Activated CD4-positive, alpha-beta T cell treated with anti-CD3 and anti-CD28 coated beads for 36 hours (primary cell): ENCODE measurements at regions of chr3 and their contacts with region 1.

Region 1: GRCh38 chr3:110314512-110315114 is 757.0 kb upstream of the NECTIN3 start:
- DNase-seq: peak; percentile 67
- ATAC-seq: peak; percentile 63
- H3K4me3 Mint-ChIP-seq: no peak overlapping the region
- H3K27ac Mint-ChIP-seq: no peak overlapping the region
- H3K4me1 Mint-ChIP-seq: peaks cover 2% of the 10 kb centered on the region
- H3K27me3 Mint-ChIP-seq: peaks cover 3% of the 10 kb centered on the region

Region 2: GRCh38 chr3:109275702-109276293 is 1038.8 kb before region 1 on chr3:
- CTCF ChIA-PET with region 1: interaction called, 3 read pairs
- POLR2A ChIA-PET with region 1: no interaction called
- intact Hi-C with region 1: loop called in 1 of 2 experiments (anchors 10 kb)
- DNase-seq: peak; percentile 46
- ATAC-seq: no peak
- H3K4me3 Mint-ChIP-seq: no peak overlapping the region
- H3K27ac Mint-ChIP-seq: no peak overlapping the region
- H3K4me1 Mint-ChIP-seq: no peaks in the 10 kb centered on the region
- H3K27me3 Mint-ChIP-seq: peaks cover 3% of the 10 kb centered on the region

Region 3: DNA sequence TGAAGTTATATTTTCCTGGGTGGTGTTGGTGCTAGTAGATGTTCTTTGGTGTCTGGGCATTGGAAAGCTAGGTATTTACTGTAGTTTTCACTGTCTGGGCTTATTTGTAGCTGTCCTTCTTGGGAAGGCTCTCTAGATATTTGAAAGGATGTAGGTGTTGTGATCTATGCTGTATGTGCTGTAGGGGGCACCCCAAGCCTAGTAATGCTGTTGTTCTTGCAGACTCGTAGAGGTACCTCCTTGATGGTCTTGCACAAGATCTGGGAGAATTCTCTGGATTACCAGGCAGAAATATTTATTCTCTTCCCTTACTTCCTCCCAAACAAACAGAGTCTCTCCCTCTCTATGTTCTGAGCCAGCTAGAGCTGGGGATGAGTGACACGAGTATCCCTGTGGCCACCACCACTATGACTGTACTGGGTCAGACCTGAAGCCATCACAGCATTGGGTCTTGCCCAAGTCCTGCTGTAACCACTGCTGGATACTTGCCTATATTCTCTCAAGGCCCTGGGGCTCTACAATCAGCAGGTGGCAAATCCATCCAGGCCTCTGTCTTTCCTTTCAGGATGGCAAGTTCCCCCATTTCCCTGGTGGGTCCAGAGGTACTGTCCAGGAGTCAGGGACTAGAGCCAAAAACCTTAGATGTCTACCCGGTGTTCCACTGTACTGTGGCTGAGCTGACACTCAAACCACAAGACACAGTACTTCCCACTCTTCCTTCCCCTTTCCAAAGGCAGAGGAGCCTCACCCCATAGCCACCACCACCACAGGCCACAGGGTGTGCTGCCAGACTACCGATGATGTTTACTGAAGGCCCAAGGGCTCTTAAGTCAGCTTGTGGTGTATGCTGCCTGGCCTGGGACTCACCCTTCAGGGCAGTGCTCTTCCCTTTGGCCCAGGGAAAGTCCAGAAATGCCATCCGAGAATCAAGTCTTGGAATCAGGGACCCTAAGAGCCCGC is 782.1 kb before region 1 on chr3:
- CTCF ChIA-PET with region 1: interaction called, 4 read pairs
- POLR2A ChIA-PET with region 1: no interaction called
- intact Hi-C with region 1: loop called (anchors 1 kb)
- DNase-seq: peak; percentile 69
- ATAC-seq: no peak
- H3K4me3 Mint-ChIP-seq: no peak overlapping the region
- H3K27ac Mint-ChIP-seq: no peak overlapping the region
- H3K4me1 Mint-ChIP-seq: no peaks in the 10 kb centered on the region
- H3K27me3 Mint-ChIP-seq: peaks cover 3% of the 10 kb centered on the region

Region 4: DNA sequence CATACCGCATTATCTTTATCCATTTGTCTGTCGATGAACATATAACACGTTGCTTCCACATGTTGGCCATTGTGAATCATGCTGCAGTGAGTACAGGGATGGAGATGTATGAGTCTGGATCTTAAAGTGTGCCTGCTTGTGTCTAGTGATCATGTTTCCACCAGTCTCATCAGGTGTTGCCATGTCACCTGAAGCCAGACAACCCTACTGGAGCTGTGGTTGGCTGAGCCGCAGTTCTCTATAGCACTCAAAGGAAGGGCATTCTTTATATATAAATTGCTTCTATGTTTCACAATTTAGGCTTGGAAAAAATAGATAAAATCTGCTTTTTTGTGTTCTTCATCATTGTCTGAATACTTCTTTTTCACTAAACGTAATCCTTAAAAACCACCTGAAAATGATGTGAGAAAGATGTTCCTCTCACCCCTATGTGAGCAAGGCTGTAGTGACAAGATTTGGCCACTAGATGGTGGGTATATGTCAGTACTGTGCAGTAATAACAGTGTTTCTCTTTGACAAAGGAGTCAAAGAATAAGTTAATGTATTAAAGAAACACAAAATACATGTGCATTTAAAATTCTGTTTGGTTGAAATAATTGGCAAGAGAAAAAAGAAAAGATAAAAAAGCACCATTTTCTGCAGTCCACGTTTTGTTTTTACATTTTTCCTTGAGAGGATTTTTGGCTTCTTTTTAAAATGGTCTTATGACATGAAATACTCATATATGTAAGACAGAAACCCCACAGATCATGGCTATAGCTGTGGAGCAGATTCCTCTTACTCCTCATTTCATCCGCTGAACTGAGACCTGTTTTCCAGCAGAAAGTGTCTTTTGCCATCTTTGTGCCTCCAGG is 582.8 kb before region 1 on chr3:
- CTCF ChIA-PET with region 1: interaction called, 6 read pairs
- POLR2A ChIA-PET with region 1: interaction called, 3 read pairs
- intact Hi-C with region 1: loop called (anchors 1 to 2 kb)
- DNase-seq: peak; percentile 72
- ATAC-seq: peak; percentile 73
- H3K4me3 Mint-ChIP-seq: no peak overlapping the region
- H3K27ac Mint-ChIP-seq: no peak overlapping the region
- H3K4me1 Mint-ChIP-seq: peaks cover 4% of the 10 kb centered on the region
- H3K27me3 Mint-ChIP-seq: no peaks in the 10 kb centered on the region

Region 5: GRCh38 chr3:110301781-110302180 is 12.8 kb before region 1 on chr3:
- CTCF ChIA-PET with region 1: interaction called, 11 read pairs
- POLR2A ChIA-PET with region 1: no interaction called
- intact Hi-C with region 1: no loop called
- DNase-seq: no peak
- ATAC-seq: no peak
- H3K4me3 Mint-ChIP-seq: no peak overlapping the region
- H3K27ac Mint-ChIP-seq: no peak overlapping the region
- H3K4me1 Mint-ChIP-seq: peaks cover 4% of the 10 kb centered on the region
- H3K27me3 Mint-ChIP-seq: no peaks in the 10 kb centered on the region